ENCODE measurements at regions of chr1 and their contacts with region 1.

Region 1: DNA sequence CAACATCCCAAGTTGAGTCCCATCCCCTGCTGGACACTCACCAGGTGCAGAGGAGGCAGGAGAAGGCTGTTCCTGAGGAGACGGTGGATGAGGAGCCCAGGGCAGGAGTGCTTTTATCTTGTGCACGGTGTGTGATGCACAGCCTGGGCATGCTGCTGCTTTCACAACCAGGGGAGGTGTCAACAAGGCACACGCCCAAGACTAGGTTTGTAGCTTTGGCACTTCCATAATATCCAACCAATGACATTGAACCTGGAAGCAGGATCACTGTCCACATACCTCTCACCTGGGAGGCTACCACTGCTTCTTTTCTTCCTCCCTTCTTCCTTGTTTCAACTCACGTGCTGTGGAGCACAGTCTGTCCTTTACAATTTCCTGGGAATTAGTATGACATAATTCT is at the start of gene LCE3D:
- DNase-seq: no peak
- ATAC-seq: no peak
- H3K4me3 ChIP-seq: no peak within 1 kb of the TSS
- H3K27ac ChIP-seq: no peak within 1 kb of the TSS
- H3K4me1 ChIP-seq: peaks cover 5% of the 10 kb centered on the region; the same call in 1 of the 2 replicates
- H3K27me3 ChIP-seq: peaks cover 0 to 1% of the 10 kb centered on the region in 2 experiments; a peak in 1 of 4 replicates
- CTCF ChIP-seq: no peak
- EP300 ChIP-seq: no peak
- POLR2A ChIP-seq: no peak
- RAD21 ChIP-seq: no peak
- polyA plus RNA-seq, gene LCE3D: not detected

Region 2: GRCh38 chr1:152623203-152623844 is 42.9 kb after region 1 on chr1:
- CTCF ChIA-PET with region 1: interaction called, 4 read pairs
- POLR2A ChIA-PET with region 1: no interaction called
- RAD21 ChIA-PET with region 1: no interaction called
- SMC1A ChIA-PET with region 1: no interaction called
- in situ Hi-C with region 1: no loop called
- intact Hi-C with region 1: loop called (anchors 2 kb)
- DNase-seq: no peak
- ATAC-seq: peak; percentile 76
- H3K4me3 ChIP-seq: no peak overlapping the region
- H3K27ac ChIP-seq: no peak overlapping the region
- H3K4me1 ChIP-seq: no peaks in the 10 kb centered on the region
- H3K27me3 ChIP-seq: no peaks in the 10 kb centered on the region
- CTCF ChIP-seq: peak; percentile 33 to 52 (median 46)
- EP300 ChIP-seq: no peak
- POLR2A ChIP-seq: no peak
- RAD21 ChIP-seq: no peak

Region 3: GRCh38 chr1:153032677-153033308 is 452.4 kb after region 1 on chr1:
- CTCF ChIA-PET with region 1: no interaction called
- POLR2A ChIA-PET with region 1: no interaction called
- RAD21 ChIA-PET with region 1: no interaction called
- SMC1A ChIA-PET with region 1: no interaction called
- in situ Hi-C with region 1: no loop called
- intact Hi-C with region 1: no loop called
- DNase-seq: no peak
- ATAC-seq: peak; percentile 67
- H3K4me3 ChIP-seq: no peak overlapping the region
- H3K27ac ChIP-seq: no peak overlapping the region
- H3K4me1 ChIP-seq: no peaks in the 10 kb centered on the region
- H3K27me3 ChIP-seq: no peaks in the 10 kb centered on the region; a peak in 1 of 4 replicates
- CTCF ChIP-seq: peak in 2 of 3 experiments; percentile 14 to 30; a peak in 3 of 6 replicates
- EP300 ChIP-seq: no peak
- POLR2A ChIP-seq: no peak
- RAD21 ChIP-seq: peak; percentile 23; the same call in 1 of the 2 replicates